Psoas muscle (tissue), 8 donors: ENCODE measurements at regions of chr15 and their contacts with region 1.

Region 1: DNA sequence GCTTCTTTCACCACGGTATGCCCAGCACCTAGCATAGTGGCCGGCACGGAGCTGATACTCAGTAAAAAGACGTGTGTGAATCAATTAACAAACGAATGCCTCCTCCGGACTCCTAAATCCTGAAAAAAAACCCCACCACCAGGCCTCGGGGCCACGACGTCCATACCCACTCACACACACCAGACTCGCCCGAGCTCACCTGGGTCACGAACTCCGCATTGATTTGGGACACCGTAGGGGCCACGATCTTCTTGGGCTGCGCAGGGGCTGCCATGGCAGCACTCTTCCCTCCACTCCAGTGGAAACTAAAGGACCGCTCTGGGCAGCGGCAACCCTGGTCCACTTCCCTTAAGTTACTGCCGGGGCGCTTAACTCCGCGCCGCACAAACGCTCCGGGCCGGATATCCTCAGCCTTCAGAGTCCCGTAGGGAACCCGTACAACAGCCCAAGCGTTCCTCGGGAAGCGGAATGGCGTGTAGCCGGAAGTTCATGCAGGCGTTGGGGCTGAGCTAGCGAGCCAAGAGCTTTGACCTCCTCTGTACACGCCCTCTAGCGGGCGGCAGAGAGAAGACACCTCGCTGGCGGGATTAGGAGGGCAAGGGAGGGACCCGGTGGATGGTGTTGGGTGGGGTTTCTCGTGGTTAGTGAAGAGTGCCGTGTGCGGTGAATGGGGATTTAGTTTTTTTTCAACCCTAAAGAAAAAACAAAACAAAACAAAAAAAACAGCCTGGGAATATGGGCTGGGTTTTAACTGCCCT is at the start of gene AQR:
- DNase-seq: peak; percentile 93 to 97
- ATAC-seq: peak; percentile 99 to 100 (median 100)
- H3K4me3 ChIP-seq: peak within 1 kb of the TSS; percentile 91
- H3K27ac ChIP-seq: peak within 1 kb of the TSS; percentile 90
- H3K4me1 ChIP-seq: peaks cover 21% of the 10 kb centered on the region
- H3K27me3 ChIP-seq: no peaks in the 10 kb centered on the region
- CTCF ChIP-seq: peak; percentile 74
- total RNA-seq, gene AQR: 8.4 to 12.2 (median 9.8) TPM

Region 2: GRCh38 chr15:34367101-34368081 is 602.1 kb before region 1 on chr15 and contains the start of gene LPCAT4:
- intact Hi-C with region 1: no loop called
- DNase-seq: peak; percentile 87 to 93
- ATAC-seq: peak; percentile 94 to 96 (median 96)
- H3K4me3 ChIP-seq: peak within 1 kb of the TSS; percentile 98
- H3K27ac ChIP-seq: peak within 1 kb of the TSS; percentile 97
- H3K4me1 ChIP-seq: peaks cover 9% of the 10 kb centered on the region
- H3K27me3 ChIP-seq: no peaks in the 10 kb centered on the region
- CTCF ChIP-seq: peak; percentile 95
- total RNA-seq, gene LPCAT4: 8.4 to 13.1 (median 10.2) TPM

Region 3: DNA sequence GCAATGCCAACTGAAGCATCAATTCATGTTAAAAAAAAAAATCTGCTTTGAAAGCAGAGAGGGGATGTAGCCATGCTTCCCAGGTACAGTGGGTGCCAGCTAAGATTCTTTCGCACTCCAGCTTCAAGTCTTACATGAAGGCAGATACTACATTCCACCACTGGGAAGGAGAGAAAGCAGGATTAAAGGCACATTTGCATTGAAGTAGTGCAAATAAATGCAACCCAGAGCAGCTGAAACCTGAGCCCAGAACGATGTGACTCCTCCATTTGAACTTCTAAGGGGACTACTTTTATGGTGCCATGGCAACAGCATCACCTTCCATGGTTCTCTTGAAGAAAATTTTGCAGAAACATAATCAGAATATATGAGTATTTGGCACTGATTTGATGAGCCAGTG is 195.6 kb before region 1 on chr15:
- intact Hi-C with region 1: no loop called
- DNase-seq: no peak
- ATAC-seq: no peak
- H3K4me3 ChIP-seq: no peak overlapping the region
- H3K27ac ChIP-seq: no peak overlapping the region
- H3K4me1 ChIP-seq: no peaks in the 10 kb centered on the region
- H3K27me3 ChIP-seq: no peaks in the 10 kb centered on the region
- CTCF ChIP-seq: no peak

Region 4: GRCh38 chr15:34987985-34988873 is 18.7 kb after region 1 on chr15 and contains the start of gene ZNF770:
- intact Hi-C with region 1: loop called in 1 of 2 experiments (anchors 1 kb)
- DNase-seq: peak; percentile 80 to 90
- ATAC-seq: peak; percentile 94 to 96 (median 96)
- H3K4me3 ChIP-seq: peak within 1 kb of the TSS; percentile 90
- H3K27ac ChIP-seq: peak within 1 kb of the TSS; percentile 98
- H3K4me1 ChIP-seq: peaks cover 37% of the 10 kb centered on the region
- H3K27me3 ChIP-seq: peaks cover 0 to 5% (median 4%) of the 10 kb centered on the region in 3 donors
- CTCF ChIP-seq: no peak
- total RNA-seq, gene ZNF770: 39.9 to 52.7 (median 49.8) TPM